Activated B cell treated with CpG ODN at 0.5 μM for 24 hours (primary cell): ENCODE measurements at regions of chr2 and their contacts with region 1.

Region 1: GRCh38 chr2:130342533-130343275 is at the start of gene IMP4:
- DNase-seq: peak; percentile 86
- ATAC-seq: peak; percentile 84
- H3K4me3 Mint-ChIP-seq: peak within 1 kb of the TSS; percentile 100
- H3K27ac Mint-ChIP-seq: peak within 1 kb of the TSS; percentile 100
- H3K4me1 Mint-ChIP-seq: peaks cover 57% of the 10 kb centered on the region
- H3K27me3 Mint-ChIP-seq: no peaks in the 10 kb centered on the region
- CTCF ChIP-seq: no peak
- total RNA-seq, gene IMP4: 121 and 140 TPM in 2 replicates

Region 2: DNA sequence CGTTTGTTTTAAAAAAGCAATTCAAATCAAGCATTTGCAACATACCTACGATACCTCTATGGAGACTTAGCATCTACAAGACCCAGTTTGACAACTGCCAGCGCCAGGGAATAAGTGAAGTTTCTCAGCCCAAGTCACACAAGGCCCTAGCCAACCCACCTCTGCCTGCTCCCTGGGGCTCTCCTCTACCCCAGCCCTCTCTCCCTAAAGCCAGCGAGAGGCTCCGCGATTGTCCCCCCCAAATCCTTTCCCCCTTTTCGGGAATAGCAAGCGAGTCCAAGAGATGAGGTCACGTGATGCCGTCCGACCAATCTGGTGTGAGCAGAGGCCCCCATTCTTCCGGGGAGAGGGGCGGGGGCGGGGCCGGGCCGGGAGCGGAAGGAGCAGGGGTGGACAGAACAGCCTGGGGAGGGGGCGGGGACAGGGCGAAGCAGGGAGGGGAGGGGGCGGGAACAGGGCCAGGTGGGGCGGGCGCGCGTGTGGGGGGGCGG is 465.4 kb before region 1 on chr2:
- CTCF ChIA-PET with region 1: no interaction called
- POLR2A ChIA-PET with region 1: no interaction called
- intact Hi-C with region 1: loop called (anchors 1 kb)
- DNase-seq: peak; percentile 71
- ATAC-seq: peak; percentile 94
- H3K4me3 Mint-ChIP-seq: peak overlapping the region; percentile 96
- H3K27ac Mint-ChIP-seq: peak overlapping the region; percentile 86
- H3K4me1 Mint-ChIP-seq: peaks cover 13% of the 10 kb centered on the region
- H3K27me3 Mint-ChIP-seq: peaks cover 2% of the 10 kb centered on the region
- CTCF ChIP-seq: no peak

Region 3: DNA sequence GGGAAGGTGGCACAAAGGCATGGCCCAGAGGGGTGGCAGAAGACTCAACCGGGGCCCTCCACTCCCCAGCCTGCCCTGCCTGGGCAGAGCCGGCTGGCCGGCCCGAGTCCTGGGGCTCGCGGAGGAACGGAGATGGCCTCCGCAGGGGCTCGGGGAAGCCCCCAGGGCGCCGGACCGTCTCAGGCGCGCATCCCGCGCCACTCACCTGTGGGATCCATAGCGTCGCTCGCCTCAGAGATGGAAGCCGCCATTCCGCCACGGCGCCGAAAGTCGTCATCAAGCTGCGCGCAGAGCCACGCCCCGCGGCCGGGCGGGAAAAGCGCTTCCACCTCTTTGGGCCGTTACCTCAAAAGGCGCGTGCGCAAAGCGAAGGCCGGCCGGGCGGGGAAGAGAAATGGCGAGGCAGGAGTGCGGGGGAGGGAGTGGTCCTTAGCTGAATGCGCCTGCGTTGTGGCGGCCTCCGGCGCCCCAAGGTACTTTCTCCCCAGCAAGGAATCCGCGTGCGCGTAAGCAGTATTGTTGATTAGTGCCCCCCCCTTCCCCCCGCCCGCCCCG is 161.3 kb before region 1 on chr2 and contains the start of gene SMPD4:
- CTCF ChIA-PET with region 1: interaction called, 19 read pairs
- POLR2A ChIA-PET with region 1: interaction called, 62 read pairs
- intact Hi-C with region 1: loop called (anchors 1 kb)
- DNase-seq: peak; percentile 97
- ATAC-seq: peak; percentile 75
- H3K4me3 Mint-ChIP-seq: peak within 1 kb of the TSS; percentile 93
- H3K27ac Mint-ChIP-seq: peak within 1 kb of the TSS; percentile 91
- H3K4me1 Mint-ChIP-seq: peaks cover 31% of the 10 kb centered on the region
- H3K27me3 Mint-ChIP-seq: no peaks in the 10 kb centered on the region
- CTCF ChIP-seq: no peak
- total RNA-seq, gene SMPD4: 58.5 and 66.8 TPM in 2 replicates

Region 4: DNA sequence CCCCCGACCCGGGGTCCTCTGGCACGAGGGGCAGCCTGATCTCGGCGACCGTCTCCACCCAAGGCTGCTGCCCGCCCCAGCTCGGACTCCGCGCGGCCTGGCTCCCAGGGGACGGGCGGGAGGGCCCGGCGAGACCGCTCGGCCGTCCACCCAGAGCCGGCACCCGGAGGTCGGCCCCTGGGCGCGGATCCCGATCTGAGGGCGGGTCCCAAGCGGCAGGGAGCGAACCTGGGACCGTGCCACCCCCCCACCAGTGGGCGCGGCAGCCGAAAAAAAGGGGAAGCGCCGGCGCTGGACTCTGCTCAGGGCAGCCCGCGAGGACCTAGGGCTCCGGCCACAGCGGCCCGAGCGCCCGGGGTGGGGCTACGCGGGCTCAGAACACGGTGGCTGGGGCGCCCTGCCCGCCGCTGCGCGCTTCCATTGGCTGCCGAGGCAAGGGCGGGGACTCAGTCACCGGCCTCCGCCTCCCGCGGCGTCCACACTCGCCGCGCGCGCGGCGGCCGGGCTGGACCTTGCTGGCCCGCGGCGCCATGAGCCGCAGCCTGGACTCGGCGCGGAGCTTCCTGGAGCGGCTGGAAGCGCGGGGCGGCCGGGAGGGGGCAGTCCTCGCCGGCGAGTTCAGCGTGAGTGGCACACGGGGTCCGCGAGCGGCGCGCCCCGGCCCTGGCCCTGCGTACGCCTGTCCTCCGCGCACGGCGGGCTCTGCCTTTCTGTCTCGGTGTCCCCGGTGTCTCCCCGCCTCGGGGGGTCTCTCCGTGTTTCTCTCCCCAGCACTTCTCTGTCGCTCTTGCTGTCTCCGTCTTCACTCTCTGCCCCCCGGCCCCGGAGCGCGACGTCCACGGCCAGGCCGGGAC is 13.1 kb after region 1 on chr2 and contains the start of gene PTPN18:
- CTCF ChIA-PET with region 1: interaction called, 3 read pairs
- POLR2A ChIA-PET with region 1: interaction called, 43 read pairs
- intact Hi-C with region 1: loop called (anchors 1 kb)
- DNase-seq: peak; percentile 59
- ATAC-seq: peak; percentile 96
- H3K4me3 Mint-ChIP-seq: peak within 1 kb of the TSS; percentile 83
- H3K27ac Mint-ChIP-seq: no peak within 1 kb of the TSS
- H3K4me1 Mint-ChIP-seq: peaks cover 31% of the 10 kb centered on the region
- H3K27me3 Mint-ChIP-seq: no peaks in the 10 kb centered on the region
- CTCF ChIP-seq: no peak
- total RNA-seq, gene PTPN18: 77.7 and 79.2 TPM in 2 replicates

Region 5: GRCh38 chr2:130372055-130372832 is 29.5 kb after region 1 on chr2:
- CTCF ChIA-PET with region 1: interaction called, 16 read pairs
- POLR2A ChIA-PET with region 1: interaction called, 96 read pairs
- intact Hi-C with region 1: loop called (anchors 1 kb)
- DNase-seq: peak; percentile 82
- ATAC-seq: peak; percentile 85
- H3K4me3 Mint-ChIP-seq: peak overlapping the region; percentile 89
- H3K27ac Mint-ChIP-seq: peak overlapping the region; percentile 95
- H3K4me1 Mint-ChIP-seq: peaks cover 64% of the 10 kb centered on the region
- H3K27me3 Mint-ChIP-seq: no peaks in the 10 kb centered on the region
- CTCF ChIP-seq: peak; percentile 80

Region 6: GRCh38 chr2:130727286-130728018 is 384.7 kb after region 1 on chr2:
- CTCF ChIA-PET with region 1: no interaction called
- POLR2A ChIA-PET with region 1: no interaction called
- intact Hi-C with region 1: loop called (anchors 10 kb)
- DNase-seq: peak; percentile 67
- ATAC-seq: peak; percentile 96
- H3K4me3 Mint-ChIP-seq: peak overlapping the region; percentile 79
- H3K27ac Mint-ChIP-seq: no peak overlapping the region
- H3K4me1 Mint-ChIP-seq: peaks cover 15% of the 10 kb centered on the region
- H3K27me3 Mint-ChIP-seq: no peaks in the 10 kb centered on the region
- CTCF ChIP-seq: no peak

Region 7: GRCh38 chr2:131105156-131105949 is 762.6 kb after region 1 on chr2 and contains the start of gene PLEKHB2:
- CTCF ChIA-PET with region 1: no interaction called
- POLR2A ChIA-PET with region 1: no interaction called
- intact Hi-C with region 1: loop called (anchors 1 kb)
- DNase-seq: peak; percentile 97
- ATAC-seq: peak; percentile 84
- H3K4me3 Mint-ChIP-seq: peak within 1 kb of the TSS; percentile 96
- H3K27ac Mint-ChIP-seq: peak within 1 kb of the TSS; percentile 91
- H3K4me1 Mint-ChIP-seq: peaks cover 34% of the 10 kb centered on the region
- H3K27me3 Mint-ChIP-seq: no peaks in the 10 kb centered on the region
- CTCF ChIP-seq: no peak
- total RNA-seq, gene PLEKHB2: 32.3 and 33.6 TPM in 2 replicates

Region 8: GRCh38 chr2:131349021-131349420 is 1006.3 kb after region 1 on chr2:
- CTCF ChIA-PET with region 1: no interaction called
- POLR2A ChIA-PET with region 1: no interaction called
- intact Hi-C with region 1: no loop called
- DNase-seq: no peak
- ATAC-seq: no peak
- H3K4me3 Mint-ChIP-seq: no peak overlapping the region
- H3K27ac Mint-ChIP-seq: no peak overlapping the region
- H3K4me1 Mint-ChIP-seq: no peaks in the 10 kb centered on the region
- H3K27me3 Mint-ChIP-seq: peaks cover 6% of the 10 kb centered on the region
- CTCF ChIP-seq: no peak